ENCODE measurements at regions of chr9 and their contacts with region 1.

Region 1: GRCh38 chr9:86413966-86414880 is 60.0 kb upstream of the TUT7 start:
- DNase-seq: peak in 4 of 5 donors; percentile 9 to 26 (median 20)
- H3K4me3 ChIP-seq: no peak overlapping the region
- H3K4me3 Mint-ChIP-seq: no peak overlapping the region
- H3K27ac ChIP-seq: no peak overlapping the region
- H3K27ac Mint-ChIP-seq: no peak overlapping the region
- H3K4me1 ChIP-seq: no peaks in the 10 kb centered on the region
- H3K4me1 Mint-ChIP-seq: no peaks in the 10 kb centered on the region
- H3K27me3 ChIP-seq: peaks cover 5% of the 10 kb centered on the region
- H3K27me3 Mint-ChIP-seq: peaks cover 1 to 5% of the 10 kb centered on the region in 2 donors

Region 2: GRCh38 chr9:86424251-86424891 is 10.1 kb after region 1 on chr9:
- CTCF ChIA-PET with region 1: interaction called, 17 read pairs
- POLR2A ChIA-PET with region 1: no interaction called
- intact Hi-C with region 1: no loop called
- DNase-seq: no peak
- H3K4me3 ChIP-seq: no peak overlapping the region
- H3K4me3 Mint-ChIP-seq: no peak overlapping the region
- H3K27ac ChIP-seq: no peak overlapping the region
- H3K27ac Mint-ChIP-seq: no peak overlapping the region
- H3K4me1 ChIP-seq: no peaks in the 10 kb centered on the region
- H3K4me1 Mint-ChIP-seq: no peaks in the 10 kb centered on the region
- H3K27me3 ChIP-seq: peaks cover 5% of the 10 kb centered on the region
- H3K27me3 Mint-ChIP-seq: peaks cover 3 to 6% of the 10 kb centered on the region in 2 donors

Region 3: DNA sequence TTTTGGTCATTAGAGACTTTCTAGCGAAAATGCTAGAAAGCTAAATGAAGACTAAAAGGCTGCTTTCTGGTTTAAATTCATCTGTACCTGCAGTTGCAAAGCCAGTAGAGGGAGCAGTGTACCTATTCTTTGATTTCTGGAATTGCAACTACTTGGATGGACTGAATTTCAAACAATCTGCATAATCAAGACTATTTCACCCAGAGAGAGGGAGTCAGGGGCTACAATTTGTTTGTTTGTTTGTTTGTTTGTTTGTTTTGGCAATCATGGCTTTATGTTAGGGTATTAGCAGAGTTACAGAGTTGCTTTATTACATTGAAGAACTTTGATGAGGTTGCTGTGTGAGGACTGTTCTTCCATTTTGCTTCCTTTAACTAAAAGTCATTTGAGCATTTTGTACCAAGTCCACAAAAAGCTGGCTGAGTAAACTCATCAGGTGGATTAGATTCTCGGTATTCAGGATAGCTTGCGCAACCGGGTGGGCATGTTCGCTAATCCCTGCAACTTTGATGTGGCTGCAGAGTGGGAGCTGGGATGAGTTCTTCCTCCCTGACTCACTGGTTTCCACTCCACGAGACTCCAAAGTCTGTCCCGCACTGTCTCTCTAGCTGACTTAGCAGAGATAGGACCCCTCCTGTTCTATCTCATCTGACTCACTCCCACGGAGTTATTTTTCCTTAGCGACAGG is 20.0 kb after region 1 on chr9:
- CTCF ChIA-PET with region 1: interaction called, 26 read pairs
- POLR2A ChIA-PET with region 1: no interaction called
- intact Hi-C with region 1: no loop called
- DNase-seq: peak in 4 of 5 donors; percentile 15 to 35 (median 28)
- H3K4me3 ChIP-seq: no peak overlapping the region
- H3K4me3 Mint-ChIP-seq: no peak overlapping the region
- H3K27ac ChIP-seq: no peak overlapping the region
- H3K27ac Mint-ChIP-seq: no peak overlapping the region
- H3K4me1 ChIP-seq: no peaks in the 10 kb centered on the region
- H3K4me1 Mint-ChIP-seq: peaks cover 0 to 2% (median 0%) of the 10 kb centered on the region in 4 donors
- H3K27me3 ChIP-seq: no peaks in the 10 kb centered on the region
- H3K27me3 Mint-ChIP-seq: peaks cover 7 to 23% of the 10 kb centered on the region in 2 donors

Region 4: GRCh38 chr9:87324613-87325194 is 910.5 kb after region 1 on chr9:
- CTCF ChIA-PET with region 1: interaction called, 30 read pairs
- POLR2A ChIA-PET with region 1: no interaction called
- intact Hi-C with region 1: no loop called
- DNase-seq: peak in 4 of 5 donors; percentile 23 to 43 (median 30)
- H3K4me3 ChIP-seq: no peak overlapping the region
- H3K4me3 Mint-ChIP-seq: no peak overlapping the region
- H3K27ac ChIP-seq: no peak overlapping the region
- H3K27ac Mint-ChIP-seq: no peak overlapping the region
- H3K4me1 ChIP-seq: no peaks in the 10 kb centered on the region
- H3K4me1 Mint-ChIP-seq: peaks cover 0 to 1% (median 0%) of the 10 kb centered on the region in 4 donors
- H3K27me3 ChIP-seq: no peaks in the 10 kb centered on the region
- H3K27me3 Mint-ChIP-seq: peaks cover 2 to 10% of the 10 kb centered on the region in 2 donors

Region 5: DNA sequence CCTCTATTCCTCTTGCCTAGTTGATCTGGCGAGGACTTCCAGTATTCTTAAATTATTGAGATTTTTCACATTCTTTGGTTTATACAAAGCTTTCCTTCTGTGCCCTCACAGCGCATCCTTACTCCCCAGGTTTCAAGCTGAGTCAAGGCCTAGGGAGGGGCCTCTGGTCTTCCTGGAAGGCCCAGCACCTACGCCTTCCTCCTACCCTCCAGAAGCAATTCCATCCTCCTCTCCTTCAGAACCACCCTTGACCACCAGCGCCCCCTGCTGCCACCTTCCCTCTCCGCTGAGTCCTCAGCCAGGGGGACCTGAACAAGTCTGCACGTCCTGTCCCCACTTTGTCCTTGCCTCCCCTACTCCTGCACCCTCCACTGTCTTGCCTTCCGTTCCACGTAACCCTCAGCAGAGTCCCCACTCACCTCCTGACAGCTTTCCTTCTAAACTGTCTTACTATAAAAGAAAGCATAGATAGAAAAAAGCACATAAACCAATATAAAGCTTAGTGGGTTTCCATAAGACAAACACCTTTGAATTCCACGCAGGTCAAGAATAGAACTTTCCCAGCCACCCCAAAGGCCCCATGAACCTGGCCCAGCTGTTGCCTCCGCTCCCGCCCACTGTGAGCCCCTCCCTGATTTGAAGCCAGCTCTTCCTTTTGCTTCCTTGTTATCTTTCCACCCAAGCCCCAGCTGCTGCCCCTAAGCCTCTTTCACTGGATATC is 1248.7 kb after region 1 on chr9:
- CTCF ChIA-PET with region 1: no interaction called
- POLR2A ChIA-PET with region 1: no interaction called
- intact Hi-C with region 1: loop called (anchors 5 kb)
- DNase-seq: peak in 1 of 5 donors; percentile 6
- H3K4me3 ChIP-seq: no peak overlapping the region
- H3K4me3 Mint-ChIP-seq: no peak overlapping the region
- H3K27ac ChIP-seq: no peak overlapping the region
- H3K27ac Mint-ChIP-seq: no peak overlapping the region
- H3K4me1 ChIP-seq: no peaks in the 10 kb centered on the region
- H3K4me1 Mint-ChIP-seq: peaks cover 0 to 1% (median 0%) of the 10 kb centered on the region in 4 donors
- H3K27me3 ChIP-seq: no peaks in the 10 kb centered on the region
- H3K27me3 Mint-ChIP-seq: peaks cover 7 to 11% of the 10 kb centered on the region in 2 donors

Measured in CD4-positive, alpha-beta memory T cell (primary cell).